ENCODE measurements at regions of chr5 and their contacts with region 1.

Region 1: DNA sequence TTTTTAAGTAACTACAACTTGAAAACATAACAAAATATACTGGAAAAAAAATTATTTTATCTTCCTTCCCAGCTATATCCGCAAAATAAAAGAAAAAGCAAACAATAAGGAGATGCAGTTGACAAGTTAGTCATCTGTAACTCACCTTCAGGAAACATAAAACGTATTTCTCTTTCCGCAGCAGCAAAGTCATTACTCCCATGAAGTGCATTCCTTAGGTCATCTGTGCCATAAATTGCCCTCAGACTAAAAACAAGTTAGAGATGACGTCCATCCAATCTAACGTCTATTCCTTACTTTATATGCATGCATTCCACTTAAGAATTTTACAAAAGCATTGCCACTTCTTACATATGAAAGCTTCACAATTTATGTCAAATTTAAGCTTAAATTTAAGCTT is 10.9 kb downstream of the NME5 start:
- DNase-seq: no peak
- ATAC-seq: no peak
- H3K4me3 ChIP-seq: no peak overlapping the region
- H3K27ac ChIP-seq: no peak overlapping the region
- H3K4me1 ChIP-seq: no peaks in the 10 kb centered on the region
- H3K27me3 ChIP-seq: no peaks in the 10 kb centered on the region; the same call in none of the 2 replicates
- CTCF ChIP-seq: no peak
- POLR2A ChIP-seq: no peak
- RAD21 ChIP-seq: no peak

Region 2: DNA sequence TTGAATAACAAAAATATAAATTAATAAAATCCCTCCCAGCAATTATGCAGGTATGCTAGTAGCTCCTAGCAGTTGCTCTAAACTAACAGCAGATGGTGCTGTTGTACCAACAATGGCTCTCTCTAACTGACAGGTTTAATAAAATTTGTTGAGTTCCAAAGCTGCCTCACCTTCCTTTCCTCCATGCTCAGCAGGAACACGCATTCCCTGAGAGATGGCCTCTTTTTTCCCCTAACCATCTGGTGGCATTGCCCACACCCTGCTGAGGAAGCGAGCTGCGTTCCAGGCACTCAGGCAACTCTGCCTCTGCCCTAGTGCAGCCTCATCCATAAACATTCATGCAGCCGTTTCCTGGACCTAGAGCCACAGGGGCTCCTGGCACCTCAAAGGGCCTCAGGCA is 498.7 kb before region 1 on chr5:
- CTCF ChIA-PET with region 1: no interaction called
- POLR2A ChIA-PET with region 1: no interaction called
- dilution Hi-C with region 1: no loop called
- in situ Hi-C with region 1: loop called (anchors 25 kb)
- intact Hi-C with region 1: loop called (anchors 1 kb)
- DNase-seq: peak; percentile 63
- ATAC-seq: peak; percentile 91
- H3K4me3 ChIP-seq: no peak overlapping the region
- H3K27ac ChIP-seq: no peak overlapping the region
- H3K4me1 ChIP-seq: no peaks in the 10 kb centered on the region; the same call in 1 of the 2 replicates
- H3K27me3 ChIP-seq: no peaks in the 10 kb centered on the region
- CTCF ChIP-seq: peak; percentile 95
- POLR2A ChIP-seq: no peak; the same call in 1 of the 2 replicates
- RAD21 ChIP-seq: peak; percentile 96

Region 3: DNA sequence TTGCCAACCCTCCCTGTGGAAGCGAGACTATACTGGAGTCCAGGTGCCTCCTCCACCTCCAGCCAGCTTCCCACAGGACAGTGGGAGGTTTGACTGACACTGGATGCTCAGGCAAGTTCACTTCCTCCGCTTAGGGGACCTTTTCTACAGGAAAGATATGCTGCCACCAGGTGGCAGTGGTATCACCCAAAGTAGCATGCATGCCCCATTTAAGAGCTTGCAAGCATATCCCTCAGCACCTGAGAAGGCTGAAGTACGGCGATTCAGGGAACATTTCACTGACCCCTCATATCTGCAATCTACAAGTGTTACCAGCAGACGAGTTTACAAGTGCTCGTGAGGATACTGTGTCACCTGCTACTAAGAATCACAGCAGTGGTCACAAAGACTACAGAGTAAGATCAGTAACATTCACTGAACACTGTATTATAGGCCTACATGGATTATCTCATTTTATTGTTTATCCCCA is 468.0 kb before region 1 on chr5:
- CTCF ChIA-PET with region 1: no interaction called
- POLR2A ChIA-PET with region 1: no interaction called
- dilution Hi-C with region 1: no loop called
- in situ Hi-C with region 1: no loop called
- intact Hi-C with region 1: loop called (anchors 1 kb)
- DNase-seq: peak; percentile 81
- ATAC-seq: peak; percentile 93
- H3K4me3 ChIP-seq: no peak overlapping the region
- H3K27ac ChIP-seq: no peak overlapping the region
- H3K4me1 ChIP-seq: no peaks in the 10 kb centered on the region
- H3K27me3 ChIP-seq: no peaks in the 10 kb centered on the region
- CTCF ChIP-seq: peak; percentile 75
- POLR2A ChIP-seq: no peak
- RAD21 ChIP-seq: peak; percentile 80

Region 4: GRCh38 chr5:137778772-137779564 is 349.4 kb before region 1 on chr5:
- CTCF ChIA-PET with region 1: interaction called, 3 read pairs
- POLR2A ChIA-PET with region 1: no interaction called
- dilution Hi-C with region 1: no loop called
- in situ Hi-C with region 1: loop called (anchors 10 kb)
- intact Hi-C with region 1: loop called (anchors 1 kb)
- DNase-seq: peak; percentile 39
- ATAC-seq: peak; percentile 72
- H3K4me3 ChIP-seq: no peak overlapping the region
- H3K27ac ChIP-seq: no peak overlapping the region
- H3K4me1 ChIP-seq: no peaks in the 10 kb centered on the region
- H3K27me3 ChIP-seq: peaks cover 5% of the 10 kb centered on the region
- CTCF ChIP-seq: peak; percentile 77
- POLR2A ChIP-seq: no peak
- RAD21 ChIP-seq: peak; percentile 59

Region 5: DNA sequence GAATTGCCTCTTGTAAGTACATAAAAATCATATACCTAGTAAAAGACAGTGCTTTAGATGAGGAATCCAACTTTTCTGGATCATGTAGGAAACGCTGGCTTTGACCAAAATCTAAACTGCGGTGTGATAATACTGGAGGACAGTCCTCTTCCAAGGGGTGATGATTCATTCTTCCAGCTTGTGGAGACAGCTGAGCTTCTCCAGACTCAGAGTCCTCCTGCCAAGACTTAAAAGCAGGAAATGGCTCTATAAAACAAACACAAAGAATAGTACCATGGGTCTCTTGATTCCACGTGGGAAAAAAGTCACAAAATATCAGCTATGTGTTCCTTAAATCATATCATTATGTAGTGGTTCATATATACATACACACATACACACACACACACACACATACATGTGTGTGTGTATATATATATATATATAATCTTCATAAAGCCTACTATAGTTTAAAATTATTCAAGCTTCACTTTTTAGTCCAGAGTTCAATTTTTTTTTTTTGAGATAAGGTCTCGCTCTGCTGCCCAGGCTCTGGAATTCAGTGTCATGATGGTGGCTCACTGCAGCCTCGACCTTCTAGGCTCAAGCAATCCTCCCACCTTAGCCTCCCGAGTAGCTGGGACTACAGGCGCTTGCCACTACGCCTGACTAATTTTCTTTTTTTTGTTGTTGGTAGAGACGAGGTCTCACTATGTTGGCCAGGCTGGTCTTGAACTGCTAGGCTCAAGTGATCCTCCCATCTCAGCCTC is 174.0 kb before region 1 on chr5:
- CTCF ChIA-PET with region 1: no interaction called
- POLR2A ChIA-PET with region 1: interaction called, 14 read pairs
- dilution Hi-C with region 1: no loop called
- in situ Hi-C with region 1: no loop called
- intact Hi-C with region 1: no loop called
- DNase-seq: peak; percentile 94
- ATAC-seq: peak; percentile 97
- H3K4me3 ChIP-seq: no peak overlapping the region
- H3K27ac ChIP-seq: peak overlapping the region; percentile 32; the same call in 1 of the 2 replicates
- H3K4me1 ChIP-seq: peaks cover 2% of the 10 kb centered on the region
- H3K27me3 ChIP-seq: no peaks in the 10 kb centered on the region
- CTCF ChIP-seq: no peak
- POLR2A ChIP-seq: no peak
- RAD21 ChIP-seq: no peak

Region 6: GRCh38 chr5:138035605-138036537 is 92.5 kb before region 1 on chr5:
- CTCF ChIA-PET with region 1: interaction called, 17 read pairs
- POLR2A ChIA-PET with region 1: no interaction called
- dilution Hi-C with region 1: no loop called
- in situ Hi-C with region 1: loop called (anchors 25 kb)
- intact Hi-C with region 1: loop called (anchors 2 kb)
- DNase-seq: peak; percentile 87
- ATAC-seq: peak; percentile 59
- H3K4me3 ChIP-seq: no peak overlapping the region
- H3K27ac ChIP-seq: no peak overlapping the region
- H3K4me1 ChIP-seq: no peaks in the 10 kb centered on the region; the same call in 1 of the 2 replicates
- H3K27me3 ChIP-seq: no peaks in the 10 kb centered on the region
- CTCF ChIP-seq: peak; percentile 99
- POLR2A ChIP-seq: no peak
- RAD21 ChIP-seq: peak; percentile 68

Region 7: GRCh38 chr5:138077065-138077696 is 51.2 kb before region 1 on chr5:
- CTCF ChIA-PET with region 1: interaction called, 11 read pairs
- POLR2A ChIA-PET with region 1: interaction called, 10 read pairs
- dilution Hi-C with region 1: no loop called
- in situ Hi-C with region 1: loop called (anchors 5 kb)
- intact Hi-C with region 1: loop called (anchors 1 kb)
- DNase-seq: peak; percentile 65
- ATAC-seq: peak; percentile 96
- H3K4me3 ChIP-seq: no peak overlapping the region
- H3K27ac ChIP-seq: no peak overlapping the region
- H3K4me1 ChIP-seq: no peaks in the 10 kb centered on the region
- H3K27me3 ChIP-seq: no peaks in the 10 kb centered on the region
- CTCF ChIP-seq: peak; percentile 86
- POLR2A ChIP-seq: no peak
- RAD21 ChIP-seq: peak; percentile 80